Naive thymus-derived CD4-positive, alpha-beta T cell (primary cell): ENCODE measurements at regions of chrX and their contacts with region 1.

Region 1: GRCh38 chrX:74614093-74614909 is at the start of gene RLIM:
- DNase-seq: peak; percentile 60 to 96 (median 95)
- ATAC-seq: peak; percentile 96
- H3K4me3 ChIP-seq: peak within 1 kb of the TSS; percentile 79
- H3K4me3 Mint-ChIP-seq: peak within 1 kb of the TSS; percentile 96 to 100 (median 99)
- H3K27ac ChIP-seq: peak within 1 kb of the TSS; percentile 98
- H3K27ac Mint-ChIP-seq: peak within 1 kb of the TSS; percentile 99 to 100 (median 100)
- H3K4me1 ChIP-seq: peaks cover 0 to 6% of the 10 kb centered on the region in 2 donors
- H3K4me1 Mint-ChIP-seq: peaks cover 0 to 42% (median 23%) of the 10 kb centered on the region in 7 donors
- H3K27me3 ChIP-seq: no peaks in the 10 kb centered on the region
- H3K27me3 Mint-ChIP-seq: no peaks in the 10 kb centered on the region
- total RNA-seq, gene RLIM: 31.6 to 51.3 (median 45.0) TPM

Region 2: GRCh38 chrX:73562984-73563737 is 1051.1 kb before region 1 on chrX and contains the start of gene CHIC1:
- CTCF ChIA-PET with region 1: no interaction called
- POLR2A ChIA-PET with region 1: no interaction called
- intact Hi-C with region 1: loop called in 1 of 2 experiments (anchors 5 kb)
- DNase-seq: peak; percentile 33 to 80 (median 71)
- ATAC-seq: peak; percentile 80
- H3K4me3 ChIP-seq: peak within 1 kb of the TSS; percentile 73
- H3K4me3 Mint-ChIP-seq: peak within 1 kb of the TSS; percentile 91 to 99 (median 96)
- H3K27ac ChIP-seq: peak within 1 kb of the TSS; percentile 81
- H3K27ac Mint-ChIP-seq: peak within 1 kb of the TSS; percentile 96 to 100 (median 98)
- H3K4me1 ChIP-seq: no peaks in the 10 kb centered on the region
- H3K4me1 Mint-ChIP-seq: peaks cover 7 to 26% (median 13%) of the 10 kb centered on the region in 7 donors
- H3K27me3 ChIP-seq: no peaks in the 10 kb centered on the region
- H3K27me3 Mint-ChIP-seq: no peaks in the 10 kb centered on the region
- total RNA-seq, gene CHIC1: 7.8 to 17.3 (median 10.7) TPM

Region 3: DNA sequence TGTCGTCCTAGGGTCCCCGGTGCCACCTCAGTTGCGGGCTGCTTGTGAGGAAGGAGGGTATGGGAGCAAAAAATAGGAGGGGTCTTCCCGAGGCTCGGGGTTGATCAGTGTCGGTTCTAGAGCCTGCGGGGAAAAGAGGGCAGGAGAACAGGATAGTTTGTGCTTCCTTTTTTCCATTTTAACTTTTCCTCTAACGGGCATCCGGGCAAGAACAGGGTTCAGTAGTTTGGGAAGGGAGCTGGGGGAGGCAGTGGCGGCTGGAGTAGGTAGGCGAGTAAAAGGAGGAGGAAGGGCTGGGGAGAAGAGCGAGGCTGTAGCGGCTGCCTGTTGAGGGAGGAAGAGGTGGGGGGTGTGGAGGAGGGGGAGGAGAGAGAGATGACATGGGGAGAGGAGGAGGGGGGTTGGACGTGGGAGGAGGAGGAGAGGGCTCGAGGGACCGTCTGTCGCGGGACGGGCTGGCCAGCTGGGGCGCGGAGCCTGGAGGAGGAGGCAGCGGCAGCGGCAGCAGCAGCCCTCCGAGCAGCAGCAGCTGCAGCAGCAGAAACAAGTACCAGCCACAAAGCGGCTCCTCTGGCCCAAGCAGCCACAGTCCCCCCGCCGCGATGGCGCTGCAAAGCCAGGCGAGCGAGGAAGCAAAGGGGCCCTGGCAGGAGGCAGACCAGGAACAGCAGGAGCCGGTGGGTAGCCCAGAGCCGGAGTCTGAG is 193.1 kb before region 1 on chrX and contains the start of gene SLC16A2:
- CTCF ChIA-PET with region 1: no interaction called
- POLR2A ChIA-PET with region 1: no interaction called
- intact Hi-C with region 1: loop called in 1 of 2 experiments (anchors 5 kb)
- DNase-seq: peak in 7 of 9 donors; percentile 16 to 44 (median 30)
- ATAC-seq: peak; percentile 58
- H3K4me3 ChIP-seq: peak within 1 kb of the TSS; percentile 41
- H3K4me3 Mint-ChIP-seq: peak within 1 kb of the TSS; percentile 81 to 91 (median 86)
- H3K27ac ChIP-seq: no peak within 1 kb of the TSS
- H3K27ac Mint-ChIP-seq: peak within 1 kb of the TSS in 2 of 9 donors; percentile 60 to 65
- H3K4me1 ChIP-seq: peaks cover 3% of the 10 kb centered on the region in 2 donors
- H3K4me1 Mint-ChIP-seq: peaks cover 0 to 14% (median 9%) of the 10 kb centered on the region in 7 donors
- H3K27me3 ChIP-seq: no peaks in the 10 kb centered on the region
- H3K27me3 Mint-ChIP-seq: peaks cover 0 to 59% (median 21%) of the 10 kb centered on the region in 5 donors
- total RNA-seq, gene SLC16A2: 0.27 to 0.38 (median 0.38) TPM in 3 of 5 experiments, not detected in the others

Region 4: GRCh38 chrX:74924449-74925225 is 310.3 kb after region 1 on chrX:
- CTCF ChIA-PET with region 1: no interaction called
- POLR2A ChIA-PET with region 1: no interaction called
- intact Hi-C with region 1: loop called in 1 of 2 experiments (anchors 1 kb)
- DNase-seq: peak in 8 of 9 donors; percentile 10 to 45 (median 30)
- ATAC-seq: peak; percentile 77
- H3K4me3 ChIP-seq: peak overlapping the region; percentile 47
- H3K4me3 Mint-ChIP-seq: peak overlapping the region; percentile 80 to 97 (median 92)
- H3K27ac ChIP-seq: peak overlapping the region; percentile 53
- H3K27ac Mint-ChIP-seq: peak overlapping the region in 7 of 9 donors; percentile 59 to 96 (median 86)
- H3K4me1 ChIP-seq: no peaks in the 10 kb centered on the region
- H3K4me1 Mint-ChIP-seq: peaks cover 4 to 11% (median 7%) of the 10 kb centered on the region in 7 donors
- H3K27me3 ChIP-seq: no peaks in the 10 kb centered on the region
- H3K27me3 Mint-ChIP-seq: peaks cover 0 to 30% (median 7%) of the 10 kb centered on the region in 5 donors

Region 5: GRCh38 chrX:75746891-75747639 is 1132.8 kb after region 1 on chrX:
- CTCF ChIA-PET with region 1: no interaction called
- POLR2A ChIA-PET with region 1: no interaction called
- intact Hi-C with region 1: loop called in 1 of 2 experiments (anchors 5 kb)
- DNase-seq: peak; percentile 5 to 30 (median 19)
- ATAC-seq: peak; percentile 56
- H3K4me3 ChIP-seq: peak overlapping the region; percentile 56
- H3K4me3 Mint-ChIP-seq: peak overlapping the region; percentile 70 to 86 (median 82)
- H3K27ac ChIP-seq: no peak overlapping the region
- H3K27ac Mint-ChIP-seq: peak overlapping the region in 7 of 9 donors; percentile 24 to 83 (median 65)
- H3K4me1 ChIP-seq: peaks cover 0 to 4% of the 10 kb centered on the region in 2 donors
- H3K4me1 Mint-ChIP-seq: peaks cover 0 to 19% (median 14%) of the 10 kb centered on the region in 7 donors
- H3K27me3 ChIP-seq: no peaks in the 10 kb centered on the region
- H3K27me3 Mint-ChIP-seq: peaks cover 0 to 13% (median 0%) of the 10 kb centered on the region in 5 donors

Region 6: DNA sequence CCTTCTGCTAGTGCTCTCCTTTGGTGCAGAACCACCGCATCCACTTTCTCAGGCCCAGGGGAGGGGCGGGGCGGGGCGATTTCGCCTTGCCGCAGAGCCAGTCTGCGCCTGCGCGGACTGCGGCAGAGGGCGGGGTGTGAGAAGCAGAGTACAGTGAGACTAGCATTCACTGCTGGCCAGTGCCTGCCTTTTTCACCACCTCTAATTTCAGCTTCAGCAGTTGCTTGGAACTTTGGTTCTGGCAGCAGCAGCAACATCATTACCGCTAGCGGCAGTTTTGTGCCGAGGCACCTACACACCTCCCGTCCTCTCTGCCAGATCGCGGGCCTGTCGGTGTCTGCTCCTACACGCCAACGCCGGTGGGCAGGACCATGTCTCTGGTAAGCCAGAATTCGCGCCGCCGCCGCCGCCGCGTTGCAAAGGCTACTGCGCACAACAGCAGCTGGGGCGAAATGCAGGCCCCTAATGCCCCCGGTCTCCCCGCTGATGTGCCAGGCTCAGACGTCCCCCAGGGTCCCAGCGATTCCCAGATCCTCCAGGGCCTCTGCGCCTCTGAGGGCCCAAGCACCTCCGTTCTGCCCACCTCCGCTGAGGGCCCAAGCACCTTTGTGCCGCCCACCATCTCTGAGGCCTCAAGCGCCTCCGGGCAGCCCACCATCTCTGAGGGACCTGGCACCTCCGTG is 1813.4 kb after region 1 on chrX and contains the start of gene MAGEE1:
- CTCF ChIA-PET with region 1: no interaction called
- POLR2A ChIA-PET with region 1: no interaction called
- intact Hi-C with region 1: loop called in 1 of 2 experiments (anchors 5 kb)
- DNase-seq: peak; percentile 66 to 80 (median 75)
- ATAC-seq: peak; percentile 91
- H3K4me3 ChIP-seq: peak within 1 kb of the TSS; percentile 81
- H3K4me3 Mint-ChIP-seq: peak within 1 kb of the TSS; percentile 85 to 95 (median 91)
- H3K27ac ChIP-seq: peak within 1 kb of the TSS; percentile 89
- H3K27ac Mint-ChIP-seq: peak within 1 kb of the TSS; percentile 86 to 96 (median 92)
- H3K4me1 ChIP-seq: peaks cover 0 to 12% of the 10 kb centered on the region in 2 donors
- H3K4me1 Mint-ChIP-seq: peaks cover 12 to 47% (median 41%) of the 10 kb centered on the region in 7 donors
- H3K27me3 ChIP-seq: no peaks in the 10 kb centered on the region
- H3K27me3 Mint-ChIP-seq: peaks cover 0 to 4% (median 0%) of the 10 kb centered on the region in 5 donors
- total RNA-seq, gene MAGEE1: 2.7 to 11.8 (median 10.7) TPM